ENCODE measurements at regions of chr12 and their contacts with region 1.

Region 1: GRCh38 chr12:75480469-75480949 is at the start of gene GLIPR1:
- DNase-seq: peak; percentile 54 to 65
- ATAC-seq: peak; percentile 75 to 96 (median 89)
- H3K4me3 ChIP-seq: peak within 1 kb of the TSS in 9 of 10 donors; percentile 24 to 58 (median 48)
- H3K27ac ChIP-seq: peak within 1 kb of the TSS in 9 of 10 donors; percentile 28 to 89 (median 58)
- H3K4me1 ChIP-seq: peaks cover 0 to 72% (median 0%) of the 10 kb centered on the region in 9 donors
- H3K27me3 ChIP-seq: no peaks in the 10 kb centered on the region
- CTCF ChIP-seq: no peak
- total RNA-seq, gene GLIPR1: 3.1 to 25.6 (median 5.1) TPM

Region 2: GRCh38 chr12:74689929-74690328 is 790.6 kb before region 1 on chr12:
- intact Hi-C with region 1: loop called in 1 of 10 experiments (anchors 10 kb)
- DNase-seq: no peak
- ATAC-seq: no peak
- H3K4me3 ChIP-seq: no peak overlapping the region
- H3K27ac ChIP-seq: no peak overlapping the region
- H3K4me1 ChIP-seq: no peaks in the 10 kb centered on the region
- H3K27me3 ChIP-seq: no peaks in the 10 kb centered on the region
- CTCF ChIP-seq: no peak

Region 3: GRCh38 chr12:75334384-75335030 is 146.0 kb before region 1 on chr12 and contains the start of gene GLIPR1L1:
- intact Hi-C with region 1: loop called in 2 of 10 experiments (anchors 10 kb)
- DNase-seq: peak; percentile 69 to 91
- ATAC-seq: peak; percentile 81 to 92 (median 87)
- H3K4me3 ChIP-seq: peak within 1 kb of the TSS in 9 of 10 donors; percentile 15 to 55 (median 52)
- H3K27ac ChIP-seq: peak within 1 kb of the TSS in 1 of 10 donors; percentile 23
- H3K4me1 ChIP-seq: peaks cover 0 to 13% (median 3%) of the 10 kb centered on the region in 9 donors
- H3K27me3 ChIP-seq: peaks cover 0 to 4% (median 0%) of the 10 kb centered on the region in 7 donors
- CTCF ChIP-seq: peak; percentile 86 to 95 (median 93)
- total RNA-seq, gene GLIPR1L1: not detected

Region 4: GRCh38 chr12:75390899-75391538 is 89.5 kb before region 1 on chr12 and contains the start of gene GLIPR1L2:
- intact Hi-C with region 1: loop called in 3 of 10 experiments (anchors 5 to 10 kb)
- DNase-seq: peak; percentile 95 to 96
- ATAC-seq: peak; percentile 99 to 100 (median 100)
- H3K4me3 ChIP-seq: peak within 1 kb of the TSS; percentile 25 to 70 (median 60)
- H3K27ac ChIP-seq: peak within 1 kb of the TSS; percentile 66 to 96 (median 89)
- H3K4me1 ChIP-seq: peaks cover 0 to 33% (median 24%) of the 10 kb centered on the region in 9 donors
- H3K27me3 ChIP-seq: no peaks in the 10 kb centered on the region
- CTCF ChIP-seq: peak; percentile 75 to 93 (median 82)
- total RNA-seq, gene GLIPR1L2: 0.66 to 2.9 (median 1.5) TPM

Region 5: GRCh38 chr12:75447691-75448393 is 32.7 kb before region 1 on chr12:
- intact Hi-C with region 1: loop called in 1 of 10 experiments (anchors 1 kb)
- DNase-seq: no peak
- ATAC-seq: no peak
- H3K4me3 ChIP-seq: no peak overlapping the region
- H3K27ac ChIP-seq: no peak overlapping the region
- H3K4me1 ChIP-seq: peaks cover 0 to 7% (median 0%) of the 10 kb centered on the region in 9 donors
- H3K27me3 ChIP-seq: no peaks in the 10 kb centered on the region
- CTCF ChIP-seq: no peak